ENCODE measurements at regions of chr3 and their contacts with region 1.

Region 1: GRCh38 chr3:46895204-46895660 is 17.7 kb downstream of the PTH1R start:
- DNase-seq: peak in 7 of 10 donors; percentile 51 to 89 (median 59)

Region 2: DNA sequence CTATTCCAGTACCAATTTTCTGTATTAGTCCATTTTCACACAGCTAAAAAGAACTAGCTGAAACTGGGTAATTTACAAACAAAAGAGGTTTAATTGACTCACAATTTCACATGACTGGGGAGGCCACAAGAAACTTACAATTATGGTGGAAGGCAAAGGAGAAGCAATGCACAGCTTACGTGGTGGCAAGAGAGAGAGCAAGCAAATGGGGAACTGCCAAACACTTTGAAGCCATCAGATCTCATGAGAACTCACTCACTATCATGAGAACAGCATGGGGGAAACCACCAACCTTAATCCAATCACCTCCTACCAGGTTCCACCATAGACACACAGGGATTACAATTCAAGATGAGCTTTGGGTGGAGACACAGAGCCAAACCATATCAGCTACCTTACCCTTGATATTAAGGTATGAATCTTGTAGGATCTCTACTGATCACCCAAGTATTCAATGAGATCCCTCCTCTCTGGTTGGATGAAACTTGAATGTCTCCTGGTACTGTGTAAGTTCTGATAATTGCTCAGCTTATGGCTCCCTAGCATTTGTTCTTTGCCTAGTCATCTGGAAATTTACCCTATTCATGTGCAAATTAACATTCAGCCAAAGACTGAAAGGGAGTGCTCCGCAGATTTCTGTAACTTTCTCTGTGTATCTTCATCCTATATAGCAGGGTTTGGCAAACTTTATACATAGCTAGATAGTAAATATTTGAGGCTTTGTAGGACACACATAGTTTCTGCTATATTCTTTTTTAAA is 70.8 kb before region 1 on chr3:
- intact Hi-C with region 1: no loop called
- DNase-seq: no peak

Region 3: GRCh38 chr3:46866720-46867549 is 28.3 kb before region 1 on chr3:
- intact Hi-C with region 1: loop called (anchors 2 kb)
- DNase-seq: peak; percentile 47 to 96 (median 86)

Measured in posterior cingulate gyrus (tissue), 11 donors.